Naive thymus-derived CD4-positive, alpha-beta T cell (primary cell): ENCODE measurements at regions of chr1 and their contacts with region 1.

Region 1: GRCh38 chr1:111334169-111334568 is 43.5 kb downstream of the CHIA start:
- DNase-seq: peak in 7 of 9 donors; percentile 60 to 78 (median 66)
- ATAC-seq: peak; percentile 83
- H3K4me3 ChIP-seq: no peak overlapping the region
- H3K4me3 Mint-ChIP-seq: no peak overlapping the region
- H3K27ac ChIP-seq: no peak overlapping the region
- H3K27ac Mint-ChIP-seq: peak overlapping the region in 1 of 9 donors; percentile 29
- H3K4me1 ChIP-seq: peaks cover 0 to 7% of the 10 kb centered on the region in 2 donors
- H3K4me1 Mint-ChIP-seq: peaks cover 3 to 14% (median 6%) of the 10 kb centered on the region in 7 donors
- H3K27me3 ChIP-seq: no peaks in the 10 kb centered on the region
- H3K27me3 Mint-ChIP-seq: peaks cover 0 to 2% (median 0%) of the 10 kb centered on the region in 5 donors

Region 2: GRCh38 chr1:110780600-110781484 is 553.3 kb before region 1 on chr1:
- CTCF ChIA-PET with region 1: no interaction called
- POLR2A ChIA-PET with region 1: interaction called, 4 read pairs
- intact Hi-C with region 1: loop called in 1 of 2 experiments (anchors 1 kb)
- DNase-seq: peak; percentile 48 to 83 (median 74)
- ATAC-seq: peak; percentile 88
- H3K4me3 ChIP-seq: no peak overlapping the region
- H3K4me3 Mint-ChIP-seq: peak overlapping the region in 5 of 10 donors; percentile 29 to 61 (median 42)
- H3K27ac ChIP-seq: no peak overlapping the region
- H3K27ac Mint-ChIP-seq: peak overlapping the region in 5 of 9 donors; percentile 2 to 82 (median 34)
- H3K4me1 ChIP-seq: peaks cover 31 to 40% of the 10 kb centered on the region in 2 donors
- H3K4me1 Mint-ChIP-seq: peaks cover 18 to 54% (median 45%) of the 10 kb centered on the region in 7 donors
- H3K27me3 ChIP-seq: no peaks in the 10 kb centered on the region
- H3K27me3 Mint-ChIP-seq: peaks cover 0 to 28% (median 0%) of the 10 kb centered on the region in 5 donors

Region 3: GRCh38 chr1:111127923-111128643 is 206.1 kb before region 1 on chr1:
- CTCF ChIA-PET with region 1: no interaction called
- POLR2A ChIA-PET with region 1: no interaction called
- intact Hi-C with region 1: loop called in 1 of 2 experiments (anchors 5 kb)
- DNase-seq: no peak
- ATAC-seq: peak; percentile 76
- H3K4me3 ChIP-seq: no peak overlapping the region
- H3K4me3 Mint-ChIP-seq: peak overlapping the region in 2 of 10 donors; percentile 4 to 43
- H3K27ac ChIP-seq: no peak overlapping the region
- H3K27ac Mint-ChIP-seq: peak overlapping the region in 3 of 9 donors; percentile 6 to 58 (median 53)
- H3K4me1 ChIP-seq: no peaks in the 10 kb centered on the region
- H3K4me1 Mint-ChIP-seq: peaks cover 19 to 38% (median 29%) of the 10 kb centered on the region in 7 donors
- H3K27me3 ChIP-seq: no peaks in the 10 kb centered on the region
- H3K27me3 Mint-ChIP-seq: no peaks in the 10 kb centered on the region

Region 4: DNA sequence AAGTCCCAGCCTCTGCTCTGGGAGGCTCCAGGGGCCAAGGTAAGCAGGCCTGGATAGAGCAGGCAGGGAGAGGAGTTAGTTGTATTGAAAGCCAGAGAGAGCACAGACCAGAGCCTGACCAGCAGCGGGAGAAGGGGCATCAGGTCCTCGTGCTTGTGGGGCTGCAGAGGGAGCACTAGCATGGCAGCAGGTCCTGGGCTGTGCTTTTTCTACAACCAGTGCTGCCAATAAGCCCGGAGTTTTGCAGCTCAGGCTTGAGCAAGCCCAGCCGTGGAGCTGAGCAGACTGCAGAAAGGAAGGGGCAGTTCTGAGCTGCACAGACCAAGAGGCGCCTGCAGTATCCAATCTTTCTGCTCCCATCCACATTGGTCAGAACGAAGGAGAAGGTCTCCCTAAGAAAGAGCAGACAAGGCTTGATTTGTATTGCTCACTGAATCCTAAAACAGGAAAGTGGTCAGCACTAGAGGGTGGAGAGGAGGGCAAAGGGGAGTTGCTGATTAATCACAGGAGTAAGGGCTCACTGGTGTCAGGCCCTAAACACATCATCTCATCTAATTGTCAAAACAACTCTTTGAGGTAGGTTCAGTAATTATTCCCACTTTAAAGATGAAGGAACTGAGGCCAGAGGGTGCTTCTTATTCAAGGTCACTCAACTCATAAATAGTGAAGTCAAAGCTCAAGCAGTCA is 136.4 kb before region 1 on chr1:
- CTCF ChIA-PET with region 1: interaction called, 22 read pairs
- POLR2A ChIA-PET with region 1: interaction called, 15 read pairs
- intact Hi-C with region 1: loop called (anchors 1 kb)
- DNase-seq: peak in 7 of 9 donors; percentile 57 to 84 (median 78)
- ATAC-seq: peak; percentile 61
- H3K4me3 ChIP-seq: peak overlapping the region; percentile 84
- H3K4me3 Mint-ChIP-seq: peak overlapping the region; percentile 90 to 100 (median 99)
- H3K27ac ChIP-seq: peak overlapping the region; percentile 90
- H3K27ac Mint-ChIP-seq: peak overlapping the region; percentile 92 to 99 (median 96)
- H3K4me1 ChIP-seq: peaks cover 57 to 66% of the 10 kb centered on the region in 2 donors
- H3K4me1 Mint-ChIP-seq: peaks cover 47 to 75% (median 66%) of the 10 kb centered on the region in 7 donors
- H3K27me3 ChIP-seq: no peaks in the 10 kb centered on the region
- H3K27me3 Mint-ChIP-seq: no peaks in the 10 kb centered on the region

Region 5: GRCh38 chr1:111227851-111228747 is 106.1 kb before region 1 on chr1:
- CTCF ChIA-PET with region 1: interaction called, 77 read pairs
- POLR2A ChIA-PET with region 1: interaction called, 7 read pairs
- intact Hi-C with region 1: loop called (anchors 1 kb)
- DNase-seq: no peak
- ATAC-seq: no peak
- H3K4me3 ChIP-seq: no peak overlapping the region
- H3K4me3 Mint-ChIP-seq: peak overlapping the region; percentile 57 to 88 (median 75)
- H3K27ac ChIP-seq: peak overlapping the region; percentile 71
- H3K27ac Mint-ChIP-seq: peak overlapping the region; percentile 74 to 99 (median 93)
- H3K4me1 ChIP-seq: peaks cover 58 to 79% of the 10 kb centered on the region in 2 donors
- H3K4me1 Mint-ChIP-seq: peaks cover 50 to 96% (median 92%) of the 10 kb centered on the region in 7 donors
- H3K27me3 ChIP-seq: no peaks in the 10 kb centered on the region
- H3K27me3 Mint-ChIP-seq: no peaks in the 10 kb centered on the region